A549 (cell line): ENCODE measurements at regions of chr5 and their contacts with region 1.

Region 1: GRCh38 chr5:133051580-133052332 is at the start of gene HSPA4:
- DNase-seq: peak; percentile 97 to 99
- ATAC-seq: peak; percentile 89 to 93
- H3K4me3 ChIP-seq: peak within 1 kb of the TSS; percentile 95
- H3K27ac ChIP-seq: peak within 1 kb of the TSS; percentile 95
- H3K4me1 ChIP-seq: peaks cover 54% of the 10 kb centered on the region
- CTCF ChIP-seq: no peak
- EP300 ChIP-seq: no peak
- POLR2A ChIP-seq: peak; percentile 75
- RAD21 ChIP-seq: no peak
- polyA plus RNA-seq, gene HSPA4: 110 and 166 TPM in 2 replicates

Region 2: GRCh38 chr5:132963175-132964104 is 88.3 kb before region 1 on chr5 and contains the start of gene AFF4:
- CTCF ChIA-PET with region 1: interaction called, 3 read pairs
- POLR2A ChIA-PET with region 1: interaction called, 39 read pairs
- DNase-seq: peak; percentile 90 to 97
- ATAC-seq: peak; percentile 96
- H3K4me3 ChIP-seq: peak within 1 kb of the TSS; percentile 84
- H3K27ac ChIP-seq: peak within 1 kb of the TSS; percentile 96 to 97
- H3K4me1 ChIP-seq: peaks cover 17% of the 10 kb centered on the region
- CTCF ChIP-seq: no peak
- EP300 ChIP-seq: no peak
- POLR2A ChIP-seq: peak; percentile 65
- RAD21 ChIP-seq: peak in 1 of 2 experiments; percentile 10; a peak in 1 of 5 replicates
- polyA plus RNA-seq, gene AFF4: 43.5 and 52.7 TPM in 2 replicates

Region 3: DNA sequence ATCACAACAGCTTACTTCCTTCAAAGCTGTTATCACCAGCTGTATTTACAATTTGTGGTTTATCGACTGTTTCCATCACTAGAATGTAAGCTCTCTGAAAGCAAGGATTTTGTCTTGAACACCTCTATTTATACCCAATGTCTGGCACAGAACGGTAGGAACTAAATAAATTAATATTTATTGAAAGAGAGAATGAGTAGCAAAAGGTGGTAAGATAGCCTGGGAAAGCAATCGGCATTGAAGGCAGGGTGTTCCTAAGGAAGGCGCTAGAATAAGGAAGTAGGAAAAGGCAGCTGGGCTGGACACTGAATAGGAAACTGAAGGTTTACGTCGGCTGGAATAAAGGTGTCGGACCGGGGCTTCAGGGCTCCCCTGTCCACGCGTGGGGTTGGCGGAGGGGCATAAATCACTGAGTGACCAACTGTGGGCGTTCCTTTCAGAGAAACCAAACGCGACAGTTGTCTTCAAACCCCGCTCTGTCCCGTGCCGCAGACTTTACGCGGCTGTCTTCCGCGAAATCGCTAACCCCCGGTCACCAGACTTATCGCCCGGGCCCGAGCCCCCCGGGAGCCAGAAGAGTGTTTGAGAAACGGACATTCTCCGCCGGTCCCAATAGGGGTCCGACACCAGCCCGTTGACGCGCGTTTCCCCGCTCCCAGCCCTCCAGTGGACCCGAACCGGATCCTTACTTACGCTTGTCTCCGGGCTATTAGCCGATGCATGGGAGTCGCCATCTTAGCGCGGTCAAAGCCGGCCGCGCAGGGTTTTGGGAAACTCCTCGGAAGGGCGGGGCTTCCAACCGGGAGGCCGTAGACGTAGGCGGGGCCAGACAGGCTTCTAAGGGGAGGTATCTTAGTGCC is 25.7 kb before region 1 on chr5 and contains the start of gene ZCCHC10:
- CTCF ChIA-PET with region 1: interaction called, 4 read pairs
- POLR2A ChIA-PET with region 1: interaction called, 14 read pairs
- DNase-seq: peak; percentile 90 to 94
- ATAC-seq: peak; percentile 98 to 99
- H3K4me3 ChIP-seq: peak within 1 kb of the TSS; percentile 63
- H3K27ac ChIP-seq: peak within 1 kb of the TSS; percentile 90 to 95
- H3K4me1 ChIP-seq: peaks cover 17% of the 10 kb centered on the region
- CTCF ChIP-seq: no peak
- EP300 ChIP-seq: no peak
- POLR2A ChIP-seq: peak; percentile 80
- RAD21 ChIP-seq: no peak
- polyA plus RNA-seq, gene ZCCHC10: 45.7 and 56.2 TPM in 2 replicates